WTC11 (cell line): ENCODE measurements at regions of chr15 and their contacts with region 1.

Region 1: DNA sequence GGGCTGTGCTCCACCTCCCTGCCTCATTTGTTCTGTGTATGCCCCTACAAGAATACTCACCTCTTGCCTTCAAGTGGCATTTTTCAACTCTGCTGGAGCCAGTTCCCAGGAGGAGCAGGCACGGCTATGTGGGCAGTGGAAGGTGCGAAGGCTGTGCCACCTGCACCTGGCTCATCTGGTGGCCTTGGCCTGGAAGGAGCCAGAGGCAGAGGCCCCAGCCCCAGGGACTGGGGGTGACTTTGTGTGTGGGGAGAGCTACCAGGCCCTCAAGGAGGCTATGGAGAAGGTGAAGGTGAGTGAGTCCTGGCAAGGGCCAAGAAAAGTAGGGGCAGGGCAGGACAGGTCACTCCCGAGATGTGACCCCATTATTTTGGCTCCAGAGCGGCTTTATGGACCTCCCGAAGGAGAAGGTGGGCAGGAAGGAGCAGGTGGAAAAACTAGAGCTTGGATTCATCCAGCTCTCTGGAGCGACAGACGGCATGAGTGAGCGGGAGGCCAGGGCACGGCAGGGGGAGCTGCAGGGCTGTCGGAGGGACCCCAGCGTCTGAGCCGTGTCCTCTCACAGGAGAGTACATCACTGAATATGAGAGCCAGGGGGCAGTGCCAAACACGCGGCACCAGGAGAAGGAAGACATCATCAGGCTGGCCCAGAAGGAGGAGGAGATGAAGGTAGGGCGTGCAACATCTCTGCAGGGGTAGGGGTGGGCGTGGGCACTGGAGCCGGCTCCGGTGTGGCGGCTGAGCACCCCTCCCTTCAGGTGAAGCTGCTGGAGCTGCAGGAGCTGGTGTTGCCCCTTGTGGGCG is 57.3 kb upstream of the UBE2Q2 start:
- DNase-seq: peak; percentile 74
- ATAC-seq: peak; percentile 66
- H3K4me3 Mint-ChIP-seq: peak overlapping the region; percentile 64
- H3K27ac Mint-ChIP-seq: no peak overlapping the region
- H3K4me1 Mint-ChIP-seq: peaks cover 7% of the 10 kb centered on the region
- H3K27me3 Mint-ChIP-seq: peaks cover 34% of the 10 kb centered on the region
- CTCF ChIP-seq: no peak

Region 2: DNA sequence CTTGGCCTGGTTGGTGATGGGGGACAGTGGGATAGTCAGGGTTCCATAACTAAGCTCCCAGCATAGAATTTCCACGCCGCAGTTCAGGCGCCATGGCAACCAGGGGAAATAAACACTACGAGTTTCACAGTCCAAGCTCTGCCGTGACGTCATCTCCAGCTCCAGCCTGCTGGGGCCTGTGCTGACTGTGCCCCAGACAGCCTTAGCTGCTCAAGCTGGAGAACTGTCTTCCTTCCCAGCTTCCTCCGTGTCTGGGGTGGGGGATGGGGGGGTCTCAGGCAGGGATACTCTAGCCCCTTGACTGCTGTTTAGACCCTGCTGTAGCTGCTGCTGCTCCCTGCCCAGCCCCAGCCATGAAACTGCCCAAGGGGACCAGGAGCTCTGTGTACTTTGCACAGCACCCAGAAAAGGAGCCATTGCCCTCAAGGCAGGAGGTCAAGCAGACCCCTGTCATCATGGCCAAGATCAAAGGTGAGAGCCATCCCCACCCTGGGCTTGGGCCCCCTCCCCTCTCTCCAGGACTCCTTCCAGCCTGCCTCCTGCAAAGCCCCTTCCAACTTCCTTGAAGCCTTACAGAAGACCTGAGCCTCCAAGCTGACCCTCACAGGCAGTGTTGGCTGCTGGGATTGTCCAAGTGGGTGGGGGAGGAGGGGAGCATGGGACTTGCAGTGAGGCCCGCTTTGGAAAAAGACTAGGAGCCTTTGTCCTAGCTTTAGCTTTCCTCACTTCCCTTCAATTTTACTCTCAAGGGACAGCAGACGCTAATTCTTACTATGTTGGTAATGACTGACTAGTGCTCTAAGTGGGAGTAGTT is 61.9 kb before region 1 on chr15:
- CTCF ChIA-PET with region 1: interaction called, 15 read pairs
- POLR2A ChIA-PET with region 1: interaction called, 3 read pairs
- DNase-seq: peak; percentile 35
- ATAC-seq: peak; percentile 9; the same call in 1 of the 2 replicates
- H3K4me3 Mint-ChIP-seq: no peak overlapping the region
- H3K27ac Mint-ChIP-seq: no peak overlapping the region
- H3K4me1 Mint-ChIP-seq: no peaks in the 10 kb centered on the region; the same call in 1 of the 2 replicates
- H3K27me3 Mint-ChIP-seq: peaks cover 50% of the 10 kb centered on the region
- CTCF ChIP-seq: no peak

Region 3: GRCh38 chr15:75732809-75733451 is 53.0 kb before region 1 on chr15:
- CTCF ChIA-PET with region 1: interaction called, 15 read pairs
- POLR2A ChIA-PET with region 1: no interaction called
- DNase-seq: peak; percentile 92
- ATAC-seq: peak; percentile 82
- H3K4me3 Mint-ChIP-seq: peak overlapping the region; percentile 20; the same call in 1 of the 2 replicates
- H3K27ac Mint-ChIP-seq: no peak overlapping the region
- H3K4me1 Mint-ChIP-seq: peaks cover 44% of the 10 kb centered on the region
- H3K27me3 Mint-ChIP-seq: peaks cover 2% of the 10 kb centered on the region; the same call in 1 of the 2 replicates
- CTCF ChIP-seq: peak; percentile 75

Region 4: DNA sequence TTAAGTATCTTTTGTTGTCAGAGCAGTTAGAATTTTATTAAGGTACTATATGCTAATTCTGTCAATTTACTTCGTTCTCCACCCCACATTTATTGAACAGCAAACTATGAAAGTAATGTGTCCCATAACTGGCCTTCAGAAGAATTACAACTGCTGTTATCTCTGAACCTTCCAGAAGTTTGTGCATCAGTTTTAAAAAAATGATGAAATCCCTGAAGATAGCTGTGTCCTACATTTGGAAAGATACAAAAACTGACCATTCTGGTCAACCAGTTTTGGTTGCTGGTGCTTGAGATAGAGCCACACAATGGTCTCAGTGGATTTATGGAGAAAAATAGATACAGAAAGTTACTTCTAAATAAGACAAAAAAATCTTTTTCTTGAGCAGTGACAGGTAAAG is 63.2 kb after region 1 on chr15:
- CTCF ChIA-PET with region 1: interaction called, 10 read pairs
- POLR2A ChIA-PET with region 1: no interaction called
- DNase-seq: no peak
- ATAC-seq: no peak
- H3K4me3 Mint-ChIP-seq: no peak overlapping the region
- H3K27ac Mint-ChIP-seq: 0 out of 2 replicates have a peak overlapping the region, but pooled peaks have one; percentile 25
- H3K4me1 Mint-ChIP-seq: peaks cover 62% of the 10 kb centered on the region
- H3K27me3 Mint-ChIP-seq: no peaks in the 10 kb centered on the region
- CTCF ChIP-seq: no peak

Region 5: DNA sequence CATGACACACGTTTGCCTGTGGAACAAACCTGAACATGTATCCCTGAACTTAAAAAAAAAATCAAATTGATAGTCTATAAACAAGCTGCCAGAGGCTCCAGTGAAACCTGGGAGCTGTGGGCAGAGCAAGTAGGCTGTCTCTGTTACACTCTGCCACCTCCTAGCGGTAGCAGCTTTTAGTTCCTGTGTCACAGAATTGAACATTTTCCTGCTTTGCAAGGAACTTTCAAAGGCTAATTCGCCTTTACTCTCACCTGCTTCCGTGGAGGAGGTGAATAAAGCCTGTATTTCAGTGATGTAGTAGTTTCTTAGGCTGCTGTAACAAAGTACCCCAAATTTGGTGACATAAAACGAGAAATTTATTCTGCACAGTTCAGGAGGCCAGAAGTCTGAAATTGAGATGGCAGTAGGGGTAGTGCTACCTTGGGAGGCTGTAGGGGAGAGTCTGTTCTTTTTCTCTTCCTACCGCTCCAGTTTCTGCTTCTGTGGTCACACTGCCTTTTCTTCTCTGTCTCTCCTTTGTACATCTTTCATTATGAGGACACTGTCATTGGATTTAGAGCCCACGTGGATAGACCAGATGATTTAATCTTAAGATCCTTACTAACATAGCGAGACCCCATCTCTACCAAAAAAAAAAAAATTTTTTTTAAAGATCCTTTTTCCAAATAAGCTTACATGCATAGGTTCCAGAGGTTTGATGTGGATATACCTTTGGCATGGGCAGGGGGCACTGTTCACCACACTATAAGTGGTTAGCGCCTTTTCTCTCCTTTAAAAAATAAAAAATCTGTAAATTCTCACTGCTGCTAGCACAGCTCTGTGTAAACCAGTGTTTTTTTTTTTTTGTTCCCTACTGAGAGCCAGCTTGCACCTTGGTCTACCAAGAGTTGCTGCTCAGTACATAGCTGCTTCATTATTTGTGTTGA is 143.0 kb after region 1 on chr15:
- CTCF ChIA-PET with region 1: interaction called, 16 read pairs
- POLR2A ChIA-PET with region 1: no interaction called
- DNase-seq: peak; percentile 66
- ATAC-seq: peak; percentile 86
- H3K4me3 Mint-ChIP-seq: no peak overlapping the region
- H3K27ac Mint-ChIP-seq: peak overlapping the region; percentile 82
- H3K4me1 Mint-ChIP-seq: peaks cover 44% of the 10 kb centered on the region
- H3K27me3 Mint-ChIP-seq: no peaks in the 10 kb centered on the region
- CTCF ChIP-seq: peak; percentile 19

Region 6: DNA sequence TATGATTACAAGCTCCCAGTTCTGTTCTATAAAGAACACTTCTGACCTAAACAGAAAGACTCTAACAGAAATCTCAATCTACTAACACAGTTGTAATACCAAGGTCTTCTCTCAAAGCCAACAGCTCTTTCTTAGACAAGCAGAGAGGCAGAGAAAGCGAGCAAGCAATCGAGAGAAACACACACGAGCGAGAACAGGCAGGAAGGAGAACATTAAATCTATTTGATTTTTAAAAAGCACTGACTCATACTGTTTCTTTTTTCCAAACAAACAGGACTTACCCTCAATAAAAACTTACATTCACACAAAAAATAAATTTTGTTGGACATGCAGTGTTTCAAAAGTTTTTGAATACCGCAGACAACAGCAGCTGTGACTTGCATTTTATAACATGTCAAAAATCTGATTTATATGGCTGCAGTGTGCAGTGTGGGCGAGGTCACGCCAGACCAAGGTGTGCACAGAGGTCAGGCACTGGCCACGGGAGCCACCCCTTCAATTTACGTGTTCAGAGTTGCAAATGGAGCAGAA is 226.1 kb after region 1 on chr15 and contains the start of gene NRG4:
- CTCF ChIA-PET with region 1: no interaction called
- POLR2A ChIA-PET with region 1: no interaction called
- DNase-seq: no peak
- ATAC-seq: no peak
- H3K4me3 Mint-ChIP-seq: no peak within 1 kb of the TSS
- H3K27ac Mint-ChIP-seq: peak within 1 kb of the TSS; percentile 70
- H3K4me1 Mint-ChIP-seq: peaks cover 6% of the 10 kb centered on the region
- H3K27me3 Mint-ChIP-seq: peaks cover 7% of the 10 kb centered on the region
- CTCF ChIP-seq: no peak
- total RNA-seq, gene NRG4: 0.18 to 0.55 TPM in 2 of 3 replicates, not detected in the other